ENCODE measurements at regions of chr14 and their contacts with region 1.

Region 1: DNA sequence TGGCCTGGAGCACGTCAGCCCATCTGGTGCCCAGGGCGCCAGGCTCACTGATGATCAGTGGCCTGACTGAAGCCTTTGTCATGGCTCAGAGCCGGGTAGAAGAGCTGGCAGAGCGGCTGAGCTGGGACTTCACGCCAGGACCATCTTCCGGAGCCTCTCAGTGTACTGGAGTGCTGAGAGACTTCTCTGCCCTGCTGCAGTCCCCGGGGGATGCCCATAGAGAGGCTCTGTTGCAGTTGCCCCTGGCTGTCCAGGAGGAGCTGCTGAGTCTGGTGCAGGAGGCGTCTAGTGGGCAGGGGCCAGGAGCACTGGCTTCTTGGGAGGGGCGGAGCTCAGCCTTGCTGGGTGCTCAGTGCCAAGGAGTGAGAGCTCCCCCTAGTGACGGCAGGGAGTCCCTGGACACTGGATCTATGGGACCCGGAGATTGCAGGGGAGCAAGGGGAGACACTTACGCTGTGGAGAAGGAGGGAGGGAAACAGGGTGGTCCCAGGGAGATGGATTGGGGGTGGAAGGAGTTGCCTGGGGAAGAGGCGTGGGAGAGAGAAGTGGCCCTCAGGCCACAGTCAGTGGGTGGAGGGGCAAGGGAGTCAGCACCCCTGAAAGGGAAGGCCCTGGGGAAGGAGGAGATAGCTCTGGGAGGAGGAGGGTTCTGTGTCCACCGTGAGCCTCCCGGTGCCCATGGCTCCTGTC is 2.0 kb downstream of the KHNYN start:
- DNase-seq: peak; percentile 94
- H3K4me3 ChIP-seq: peak overlapping the region in 2 of 4 donors; percentile 61 to 85
- H3K27ac ChIP-seq: peak overlapping the region; percentile 92 to 97 (median 96)
- H3K4me1 ChIP-seq: peaks cover 24 to 57% (median 46%) of the 10 kb centered on the region in 4 donors
- H3K27me3 ChIP-seq: no peaks in the 10 kb centered on the region
- CTCF ChIP-seq: peak; percentile 88 to 98 (median 94)
- EP300 ChIP-seq: no peak
- POLR2A ChIP-seq: no peak

Region 2: GRCh38 chr14:24232121-24232644 is 199.5 kb before region 1 on chr14 and contains the start of gene NEDD8:
- in situ Hi-C with region 1: loop called in 3 of 4 experiments (anchors 25 kb)
- intact Hi-C with region 1: no loop called
- DNase-seq: peak; percentile 93
- H3K4me3 ChIP-seq: peak within 1 kb of the TSS; percentile 55 to 87 (median 74)
- H3K27ac ChIP-seq: peak within 1 kb of the TSS; percentile 86 to 96 (median 92)
- H3K4me1 ChIP-seq: peaks cover 16 to 29% (median 23%) of the 10 kb centered on the region in 4 donors
- H3K27me3 ChIP-seq: no peaks in the 10 kb centered on the region
- CTCF ChIP-seq: no peak
- EP300 ChIP-seq: no peak
- POLR2A ChIP-seq: peak; percentile 69
- total RNA-seq, gene NEDD8: 42.2 to 113 (median 69.9) TPM

Region 3: GRCh38 chr14:24241829-24242443 is 189.8 kb before region 1 on chr14:
- in situ Hi-C with region 1: loop called (anchors 10 to 25 kb)
- intact Hi-C with region 1: no loop called
- DNase-seq: peak; percentile 95
- H3K4me3 ChIP-seq: peak overlapping the region; percentile 54 to 78 (median 59)
- H3K27ac ChIP-seq: peak overlapping the region; percentile 97 to 100 (median 98)
- H3K4me1 ChIP-seq: peaks cover 28 to 40% (median 30%) of the 10 kb centered on the region in 4 donors
- H3K27me3 ChIP-seq: no peaks in the 10 kb centered on the region
- CTCF ChIP-seq: peak; percentile 63 to 88 (median 67)
- EP300 ChIP-seq: no peak
- POLR2A ChIP-seq: no peak

Region 4: GRCh38 chr14:24332268-24332993 is 99.3 kb before region 1 on chr14:
- in situ Hi-C with region 1: loop called (anchors 5 to 25 kb)
- intact Hi-C with region 1: loop called (anchors 2 kb)
- DNase-seq: peak; percentile 87
- H3K4me3 ChIP-seq: peak overlapping the region in 3 of 4 donors; percentile 2 to 41 (median 21)
- H3K27ac ChIP-seq: peak overlapping the region in 3 of 4 donors; percentile 24 to 30 (median 26)
- H3K4me1 ChIP-seq: peaks cover 15 to 45% (median 32%) of the 10 kb centered on the region in 4 donors
- H3K27me3 ChIP-seq: peaks cover 28% of the 10 kb centered on the region
- CTCF ChIP-seq: peak; percentile 71 to 87 (median 80)
- EP300 ChIP-seq: no peak
- POLR2A ChIP-seq: no peak

Region 5: GRCh38 chr14:24339284-24340151 is 92.2 kb before region 1 on chr14 and contains the start of gene RIPK3:
- in situ Hi-C with region 1: loop called (anchors 5 to 25 kb)
- intact Hi-C with region 1: no loop called
- DNase-seq: peak; percentile 87
- H3K4me3 ChIP-seq: peak within 1 kb of the TSS; percentile 34 to 60 (median 52)
- H3K27ac ChIP-seq: peak within 1 kb of the TSS; percentile 72 to 85 (median 78)
- H3K4me1 ChIP-seq: peaks cover 5 to 23% (median 10%) of the 10 kb centered on the region in 4 donors
- H3K27me3 ChIP-seq: peaks cover 10% of the 10 kb centered on the region
- CTCF ChIP-seq: peak in 1 of 5 experiments; percentile 15
- EP300 ChIP-seq: no peak
- POLR2A ChIP-seq: peak; percentile 65
- total RNA-seq, gene RIPK3: 19.3 to 156 (median 53.6) TPM

Region 6: GRCh38 chr14:24366721-24367513 is 64.8 kb before region 1 on chr14:
- in situ Hi-C with region 1: loop called in 2 of 4 experiments (anchors 10 kb)
- intact Hi-C with region 1: loop called (anchors 2 kb)
- DNase-seq: peak; percentile 94
- H3K4me3 ChIP-seq: peak overlapping the region; percentile 7 to 68 (median 57)
- H3K27ac ChIP-seq: peak overlapping the region; percentile 89 to 93 (median 90)
- H3K4me1 ChIP-seq: peaks cover 6 to 41% (median 28%) of the 10 kb centered on the region in 4 donors
- H3K27me3 ChIP-seq: peaks cover 16% of the 10 kb centered on the region
- CTCF ChIP-seq: peak in 1 of 5 experiments; percentile 22
- EP300 ChIP-seq: no peak
- POLR2A ChIP-seq: peak; percentile 74

Measured in transverse colon (tissue), 4 donors.